Calu3 (cell line): ENCODE measurements at regions of chr1 and their contacts with region 1.

Region 1: DNA sequence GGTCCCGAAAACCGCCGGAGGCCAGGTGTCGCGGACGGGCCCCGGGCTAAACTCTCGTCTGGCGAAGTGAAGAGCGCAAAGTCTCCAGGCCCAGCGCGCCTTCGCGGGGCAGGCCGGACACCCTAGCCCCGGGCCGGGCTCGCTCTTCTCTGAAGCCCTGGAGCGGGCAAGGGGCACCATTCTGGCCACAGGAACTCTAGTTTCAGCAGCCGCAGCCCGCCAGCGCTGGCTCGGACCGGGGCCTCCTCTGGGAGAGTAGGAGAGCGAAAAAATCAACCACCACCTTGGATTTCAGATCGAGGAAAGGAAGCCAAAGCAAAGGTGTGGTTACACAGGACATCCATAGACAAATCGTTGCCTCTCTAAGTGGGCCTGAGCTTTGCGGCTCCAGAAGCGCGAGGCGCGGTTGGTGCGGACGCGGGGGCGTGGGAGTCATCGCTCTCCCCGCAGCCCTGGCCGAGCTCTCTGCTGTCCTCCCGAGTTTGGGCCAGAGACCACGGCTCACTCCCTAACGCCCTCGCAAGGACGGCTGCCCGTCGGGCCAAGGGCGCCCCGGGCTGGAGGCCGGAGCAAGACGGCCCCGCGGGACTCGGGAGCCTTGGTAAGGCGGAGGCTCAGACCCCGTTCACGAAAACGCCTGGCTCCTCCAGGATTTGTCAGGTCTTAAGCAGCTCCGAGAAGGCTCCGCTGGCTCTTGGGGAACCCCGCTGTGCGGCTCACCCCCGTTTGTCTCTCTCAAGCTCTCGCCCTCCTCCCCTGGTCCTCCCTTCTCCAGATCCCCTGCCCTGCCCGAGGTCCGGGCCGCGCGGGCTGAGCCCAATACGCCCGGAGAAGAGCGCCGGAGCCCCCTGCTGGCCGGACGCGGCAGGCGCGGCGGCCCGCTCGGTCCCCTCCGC is 132.9 kb upstream of the DPYD start:
- DNase-seq: peak; percentile 82
- H3K4me3 Mint-ChIP-seq: peak overlapping the region; percentile 74
- H3K27ac Mint-ChIP-seq: peak overlapping the region; percentile 85
- H3K4me1 Mint-ChIP-seq: peaks cover 30% of the 10 kb centered on the region
- H3K27me3 Mint-ChIP-seq: no peaks in the 10 kb centered on the region
- CTCF ChIP-seq: peak; percentile 89

Region 2: DNA sequence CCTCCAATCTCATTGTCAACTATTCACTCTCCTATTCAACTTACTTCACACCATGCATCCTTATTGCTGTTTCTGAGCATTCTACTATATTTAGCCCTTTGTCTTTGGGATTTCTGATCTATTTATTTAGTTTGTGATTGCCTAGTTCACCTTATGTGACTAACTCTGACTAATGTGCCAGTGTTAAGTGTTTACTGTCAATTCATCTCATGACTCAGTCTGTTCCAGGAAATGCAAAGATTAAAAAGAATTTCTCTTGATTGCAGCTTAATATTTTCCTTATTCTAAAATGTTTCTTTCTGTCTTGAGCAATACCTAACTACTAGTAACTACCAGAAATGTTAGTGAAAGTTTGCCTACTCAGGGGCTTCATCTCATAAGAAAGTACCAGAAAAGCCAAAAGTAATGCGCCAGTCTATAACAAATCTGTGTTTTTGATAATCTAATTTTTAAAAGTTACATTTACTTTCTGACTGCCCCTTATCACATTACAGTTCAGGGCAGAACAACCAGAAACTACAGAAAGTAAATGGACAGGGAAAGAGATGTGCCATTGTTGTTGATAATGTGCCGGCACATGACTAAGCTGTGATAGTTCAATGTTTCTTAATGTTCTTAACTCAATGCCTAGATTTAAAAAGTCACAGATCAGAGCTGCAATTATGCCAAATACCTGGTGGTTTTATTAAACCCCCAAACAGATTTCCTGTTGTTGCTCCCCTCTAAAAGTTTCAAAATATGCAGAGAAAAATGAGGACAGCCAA is 775.6 kb before region 1 on chr1:
- CTCF ChIA-PET with region 1: no interaction called
- intact Hi-C with region 1: loop called (anchors 10 kb)
- DNase-seq: no peak
- H3K4me3 Mint-ChIP-seq: peak overlapping the region; percentile 9
- H3K27ac Mint-ChIP-seq: peak overlapping the region; percentile 96
- H3K4me1 Mint-ChIP-seq: peaks cover 45% of the 10 kb centered on the region
- H3K27me3 Mint-ChIP-seq: no peaks in the 10 kb centered on the region
- CTCF ChIP-seq: no peak

Region 3: GRCh38 chr1:97668945-97669344 is 384.8 kb before region 1 on chr1:
- CTCF ChIA-PET with region 1: no interaction called
- intact Hi-C with region 1: loop called (anchors 1 kb)
- DNase-seq: peak; percentile 15
- H3K4me3 Mint-ChIP-seq: no peak overlapping the region
- H3K27ac Mint-ChIP-seq: no peak overlapping the region
- H3K4me1 Mint-ChIP-seq: no peaks in the 10 kb centered on the region
- H3K27me3 Mint-ChIP-seq: no peaks in the 10 kb centered on the region
- CTCF ChIP-seq: no peak

Region 4: GRCh38 chr1:97875996-97876395 is 177.7 kb before region 1 on chr1:
- CTCF ChIA-PET with region 1: no interaction called
- intact Hi-C with region 1: no loop called
- DNase-seq: no peak
- H3K4me3 Mint-ChIP-seq: no peak overlapping the region
- H3K27ac Mint-ChIP-seq: no peak overlapping the region
- H3K4me1 Mint-ChIP-seq: no peaks in the 10 kb centered on the region
- H3K27me3 Mint-ChIP-seq: no peaks in the 10 kb centered on the region
- CTCF ChIP-seq: no peak

Region 5: GRCh38 chr1:98001764-98002163 is 52.0 kb before region 1 on chr1:
- CTCF ChIA-PET with region 1: no interaction called
- intact Hi-C with region 1: loop called (anchors 2 kb)
- DNase-seq: no peak
- H3K4me3 Mint-ChIP-seq: no peak overlapping the region
- H3K27ac Mint-ChIP-seq: no peak overlapping the region
- H3K4me1 Mint-ChIP-seq: peaks cover 9% of the 10 kb centered on the region
- H3K27me3 Mint-ChIP-seq: no peaks in the 10 kb centered on the region
- CTCF ChIP-seq: no peak

Region 6: DNA sequence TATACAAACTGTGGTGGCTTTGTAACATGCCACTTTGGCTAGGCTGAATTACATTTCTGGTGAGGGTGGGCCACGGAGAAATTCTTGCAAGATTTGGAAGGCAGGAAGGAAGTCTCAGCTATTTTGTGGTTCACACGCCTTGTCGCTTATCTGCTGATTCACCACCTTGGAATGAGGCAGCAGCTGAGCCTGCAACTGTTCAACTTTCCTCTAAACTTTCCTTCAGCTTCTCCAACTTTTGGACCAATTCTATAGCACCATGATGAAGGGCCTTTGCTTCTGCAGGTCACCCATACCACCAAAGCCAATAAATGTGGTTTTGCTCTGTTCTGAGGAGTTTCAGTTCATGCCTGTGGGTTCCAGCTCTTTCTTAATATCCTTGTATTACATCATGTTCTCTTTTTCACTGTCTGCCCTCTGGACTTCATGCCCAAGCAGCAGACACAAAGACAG is 270.2 kb after region 1 on chr1:
- CTCF ChIA-PET with region 1: interaction called, 3 read pairs
- intact Hi-C with region 1: loop called (anchors 10 kb)
- DNase-seq: peak; percentile 82
- H3K4me3 Mint-ChIP-seq: peak overlapping the region; percentile 29
- H3K27ac Mint-ChIP-seq: peak overlapping the region; percentile 92
- H3K4me1 Mint-ChIP-seq: peaks cover 51% of the 10 kb centered on the region
- H3K27me3 Mint-ChIP-seq: no peaks in the 10 kb centered on the region
- CTCF ChIP-seq: no peak

Region 7: DNA sequence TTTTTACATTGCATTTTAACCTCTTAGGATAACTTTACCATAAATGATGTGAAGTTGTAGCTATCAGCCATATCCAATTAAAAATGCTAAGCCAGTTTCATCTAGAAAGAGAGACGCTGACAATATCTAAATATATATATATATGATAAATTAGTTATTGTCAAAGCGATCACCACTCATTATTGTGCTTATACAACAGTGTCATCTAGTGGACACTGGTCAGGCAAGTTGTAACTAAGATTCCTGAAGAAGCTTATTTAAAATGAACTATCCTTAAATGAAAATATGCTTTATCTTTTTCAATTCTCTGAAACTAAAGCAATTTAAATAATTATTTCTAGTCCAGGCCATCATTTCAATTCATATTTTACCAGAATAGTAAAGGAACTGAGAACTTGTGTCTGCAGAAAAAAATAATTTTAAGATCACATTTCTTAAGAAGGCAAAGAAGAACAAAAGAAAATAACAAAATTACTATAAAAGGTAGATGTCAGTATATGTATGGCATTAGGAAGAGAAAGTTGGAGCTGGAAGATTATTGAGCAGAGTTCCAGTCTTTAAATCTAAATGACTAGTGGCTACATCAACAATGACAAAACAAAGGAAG is 414.5 kb after region 1 on chr1:
- CTCF ChIA-PET with region 1: interaction called, 3 read pairs
- intact Hi-C with region 1: loop called (anchors 2 kb)
- DNase-seq: peak; percentile 9
- H3K4me3 Mint-ChIP-seq: no peak overlapping the region
- H3K27ac Mint-ChIP-seq: no peak overlapping the region
- H3K4me1 Mint-ChIP-seq: peaks cover 22% of the 10 kb centered on the region
- H3K27me3 Mint-ChIP-seq: no peaks in the 10 kb centered on the region
- CTCF ChIP-seq: peak; percentile 59